ENCODE measurements at regions of chr6 and their contacts with region 1.

Region 1: DNA sequence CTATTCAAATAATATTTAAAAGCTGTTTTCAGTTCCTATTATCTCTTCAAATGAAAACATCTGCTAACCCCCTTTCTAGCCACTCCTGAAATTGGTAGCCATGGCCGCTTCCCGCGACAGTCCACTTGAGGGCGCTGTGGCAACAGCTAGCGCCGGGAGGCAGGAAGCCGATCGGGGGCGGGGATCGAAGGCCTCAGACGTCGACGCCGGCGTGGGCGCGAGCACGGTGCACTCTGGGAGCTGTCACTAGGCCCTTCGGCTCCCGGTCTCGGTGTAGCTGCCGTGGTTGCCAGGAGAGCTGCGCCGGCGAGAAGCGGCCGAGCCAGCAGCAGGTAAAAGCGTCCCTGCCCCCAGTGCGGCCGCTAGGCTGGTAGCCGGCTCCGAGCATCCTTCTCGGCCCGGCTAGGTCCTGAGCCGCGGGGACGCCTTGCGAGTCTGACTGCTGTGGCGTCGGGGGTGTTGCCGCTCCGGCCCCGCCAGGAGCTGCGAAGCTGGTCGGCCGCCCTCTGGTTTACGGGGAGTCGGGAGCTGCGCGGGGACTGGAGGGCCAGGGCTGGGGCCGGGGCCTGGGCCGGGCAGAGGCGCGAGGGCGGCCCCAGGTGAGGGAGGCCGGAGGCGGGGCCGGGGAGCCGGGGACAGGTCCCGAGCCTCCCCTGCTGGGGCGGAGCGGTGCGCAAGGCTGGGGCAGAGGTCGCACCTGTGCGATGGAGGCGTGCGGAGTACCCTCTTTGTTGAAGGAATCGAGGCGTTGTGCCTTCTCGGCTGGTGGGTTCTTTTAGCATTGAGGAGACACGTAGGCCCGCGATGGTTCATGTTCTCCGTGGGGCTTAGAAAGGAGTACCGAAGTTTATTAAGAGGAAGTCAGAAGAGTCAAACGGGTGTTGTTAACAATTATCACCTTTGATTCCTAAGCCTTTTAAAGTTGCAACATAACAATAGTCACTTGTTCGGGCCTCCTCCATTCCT is at the start of gene DOP1A:
- DNase-seq: peak; percentile 95
- H3K4me3 Mint-ChIP-seq: peak within 1 kb of the TSS; percentile 85
- H3K27ac Mint-ChIP-seq: peak within 1 kb of the TSS; percentile 17
- H3K4me1 Mint-ChIP-seq: peaks cover 22% of the 10 kb centered on the region
- H3K27me3 Mint-ChIP-seq: no peaks in the 10 kb centered on the region
- CTCF ChIP-seq: peak; percentile 94
- total RNA-seq, gene DOP1A: 25.8 and 31.3 TPM in 2 replicates

Region 2: GRCh38 chr6:82022601-82023102 is 1045.1 kb before region 1 on chr6:
- CTCF ChIA-PET with region 1: no interaction called
- POLR2A ChIA-PET with region 1: no interaction called
- intact Hi-C with region 1: no loop called
- DNase-seq: peak; percentile 83
- H3K4me3 Mint-ChIP-seq: no peak overlapping the region
- H3K27ac Mint-ChIP-seq: no peak overlapping the region
- H3K4me1 Mint-ChIP-seq: peaks cover 13% of the 10 kb centered on the region
- H3K27me3 Mint-ChIP-seq: no peaks in the 10 kb centered on the region
- CTCF ChIP-seq: no peak

Region 3: GRCh38 chr6:82247634-82248232 is 820.0 kb before region 1 on chr6 and contains the start of gene IBTK:
- CTCF ChIA-PET with region 1: interaction called, 55 read pairs
- POLR2A ChIA-PET with region 1: interaction called, 82 read pairs
- intact Hi-C with region 1: no loop called
- DNase-seq: peak; percentile 96
- H3K4me3 Mint-ChIP-seq: peak within 1 kb of the TSS; percentile 86
- H3K27ac Mint-ChIP-seq: peak within 1 kb of the TSS; percentile 95
- H3K4me1 Mint-ChIP-seq: peaks cover 31% of the 10 kb centered on the region
- H3K27me3 Mint-ChIP-seq: no peaks in the 10 kb centered on the region
- CTCF ChIP-seq: no peak
- total RNA-seq, gene IBTK: 59.0 and 66.2 TPM in 2 replicates

Region 4: GRCh38 chr6:82331031-82331773 is 736.5 kb before region 1 on chr6:
- CTCF ChIA-PET with region 1: interaction called, 11 read pairs
- POLR2A ChIA-PET with region 1: no interaction called
- intact Hi-C with region 1: no loop called
- DNase-seq: peak; percentile 94
- H3K4me3 Mint-ChIP-seq: peak overlapping the region; percentile 68
- H3K27ac Mint-ChIP-seq: peak overlapping the region; percentile 91
- H3K4me1 Mint-ChIP-seq: peaks cover 34% of the 10 kb centered on the region
- H3K27me3 Mint-ChIP-seq: no peaks in the 10 kb centered on the region
- CTCF ChIP-seq: peak; percentile 38

Region 5: DNA sequence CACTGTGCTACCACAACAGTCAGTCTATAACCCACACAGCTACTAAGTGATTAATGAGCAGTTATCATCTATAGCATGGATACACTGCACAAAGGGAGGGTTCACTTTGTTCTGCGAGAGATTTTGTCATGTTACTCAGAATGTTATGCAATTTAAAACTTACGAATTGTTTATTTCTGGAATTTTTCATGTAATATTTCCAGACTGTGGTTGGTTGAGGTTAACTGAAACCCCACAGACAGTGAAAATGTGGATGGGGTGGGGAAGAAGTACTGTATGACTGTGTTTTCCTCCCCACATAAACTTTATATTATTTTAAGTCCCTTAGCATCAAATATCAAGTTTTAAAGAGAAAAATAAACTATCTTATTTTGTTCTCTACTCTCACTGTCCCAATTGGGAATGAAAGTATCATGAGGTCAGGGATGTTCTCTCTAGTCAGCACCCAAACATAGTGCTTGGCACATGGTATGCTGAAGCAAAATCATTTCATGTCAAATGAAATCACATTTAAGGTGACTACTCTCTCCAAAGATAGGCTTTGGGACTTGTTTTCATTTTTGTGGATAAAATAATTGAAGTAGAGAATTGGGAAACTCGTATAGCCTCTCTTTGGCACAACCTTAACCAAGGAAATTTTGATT is 25.1 kb after region 1 on chr6:
- CTCF ChIA-PET with region 1: interaction called, 42 read pairs
- POLR2A ChIA-PET with region 1: interaction called, 14 read pairs
- intact Hi-C with region 1: no loop called
- DNase-seq: peak; percentile 26
- H3K4me3 Mint-ChIP-seq: no peak overlapping the region
- H3K27ac Mint-ChIP-seq: no peak overlapping the region
- H3K4me1 Mint-ChIP-seq: no peaks in the 10 kb centered on the region
- H3K27me3 Mint-ChIP-seq: no peaks in the 10 kb centered on the region
- CTCF ChIP-seq: no peak

Region 6: DNA sequence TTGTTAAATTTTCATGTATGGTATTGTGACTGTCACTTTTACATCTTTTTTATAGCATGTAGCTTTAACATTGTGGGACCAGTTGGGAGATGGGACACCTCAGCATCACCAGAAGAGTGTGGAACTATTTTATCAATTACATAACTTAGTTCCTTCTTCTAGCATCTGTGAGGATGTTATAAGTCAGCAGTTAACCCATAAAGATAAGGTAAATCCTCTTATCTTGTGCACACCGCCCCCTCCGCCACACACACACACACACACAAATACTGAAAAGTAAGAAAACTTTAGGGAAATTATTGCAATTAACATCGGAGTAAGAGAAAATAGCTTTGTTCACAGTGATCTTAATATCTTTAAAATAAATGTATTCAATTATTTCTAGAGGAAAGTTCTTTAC is 64.4 kb after region 1 on chr6:
- CTCF ChIA-PET with region 1: interaction called, 23 read pairs
- POLR2A ChIA-PET with region 1: interaction called, 6 read pairs
- intact Hi-C with region 1: no loop called
- DNase-seq: no peak
- H3K4me3 Mint-ChIP-seq: no peak overlapping the region
- H3K27ac Mint-ChIP-seq: no peak overlapping the region
- H3K4me1 Mint-ChIP-seq: no peaks in the 10 kb centered on the region
- H3K27me3 Mint-ChIP-seq: no peaks in the 10 kb centered on the region
- CTCF ChIP-seq: no peak

Region 7: DNA sequence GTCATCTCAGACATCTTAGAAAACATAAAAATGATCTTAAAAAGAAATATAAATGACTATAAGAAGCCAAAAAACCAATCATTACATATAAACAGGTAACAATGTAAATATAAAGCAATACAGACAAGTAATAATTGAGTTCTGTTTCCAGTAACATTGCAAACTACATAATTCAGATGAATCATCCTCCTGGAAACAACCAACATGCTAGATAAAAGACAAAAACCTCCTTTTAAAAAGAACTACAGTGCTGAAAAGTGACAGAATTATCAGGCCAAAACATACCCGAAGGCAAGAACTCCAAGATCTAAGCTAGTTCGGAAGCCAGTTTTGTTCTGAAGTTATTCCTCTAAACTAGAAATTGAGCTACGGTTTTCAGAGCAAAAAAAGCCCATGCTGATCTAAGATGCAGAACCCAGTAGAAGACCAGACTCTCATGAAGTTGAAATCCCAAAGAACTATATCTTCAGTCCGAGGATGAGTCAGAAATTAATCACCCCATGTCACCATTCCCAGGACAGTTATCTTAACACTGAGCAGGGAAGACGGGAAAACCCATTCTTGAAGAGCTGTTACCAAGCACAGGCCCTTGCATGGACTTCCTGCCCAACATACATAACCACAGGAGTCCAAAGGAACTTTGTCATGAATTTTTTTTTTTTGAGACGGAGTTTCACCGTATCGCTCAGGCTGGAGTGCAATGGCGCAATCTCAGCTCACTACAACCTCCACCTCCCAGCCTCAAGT is 115.5 kb after region 1 on chr6:
- CTCF ChIA-PET with region 1: interaction called, 88 read pairs
- POLR2A ChIA-PET with region 1: interaction called, 6 read pairs
- intact Hi-C with region 1: loop called (anchors 2 kb)
- DNase-seq: peak; percentile 91
- H3K4me3 Mint-ChIP-seq: peak overlapping the region; percentile 12
- H3K27ac Mint-ChIP-seq: peak overlapping the region; percentile 74
- H3K4me1 Mint-ChIP-seq: peaks cover 30% of the 10 kb centered on the region
- H3K27me3 Mint-ChIP-seq: no peaks in the 10 kb centered on the region
- CTCF ChIP-seq: no peak

Region 8: DNA sequence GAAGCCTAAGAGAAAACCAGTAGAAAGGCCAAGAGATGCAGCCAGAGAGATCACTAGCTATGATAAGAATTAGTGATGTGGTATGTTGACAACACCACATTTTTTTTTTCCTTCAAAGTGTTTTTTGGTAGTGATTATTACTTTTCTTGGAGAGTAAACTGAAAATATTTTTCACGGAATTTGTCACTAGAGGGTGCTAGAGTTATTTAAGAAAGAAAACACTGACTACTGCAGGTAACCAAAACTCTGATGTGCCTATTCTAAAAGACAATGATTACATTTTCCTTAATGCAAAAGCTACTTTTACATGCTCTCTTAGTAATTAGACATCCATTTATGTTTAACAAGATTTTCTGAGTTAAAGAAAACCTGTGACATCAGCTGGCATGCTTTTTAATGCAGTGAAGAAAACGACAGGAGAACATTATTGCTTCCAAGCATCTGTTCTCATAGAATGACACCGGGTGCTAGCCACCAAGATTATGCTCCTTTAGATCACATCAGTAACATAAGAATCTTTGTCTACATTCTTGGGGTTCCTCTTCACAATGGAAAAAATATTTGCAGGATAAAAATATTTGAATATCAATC is 154.3 kb after region 1 on chr6:
- CTCF ChIA-PET with region 1: interaction called, 231 read pairs
- POLR2A ChIA-PET with region 1: no interaction called
- intact Hi-C with region 1: no loop called
- DNase-seq: peak; percentile 41
- H3K4me3 Mint-ChIP-seq: no peak overlapping the region
- H3K27ac Mint-ChIP-seq: no peak overlapping the region
- H3K4me1 Mint-ChIP-seq: no peaks in the 10 kb centered on the region
- H3K27me3 Mint-ChIP-seq: no peaks in the 10 kb centered on the region
- CTCF ChIP-seq: peak; percentile 39

Measured in MCF 10A (cell line).